ENCODE measurements at regions of chr2 and their contacts with region 1.

Region 1: GRCh38 chr2:211157856-211158463 is 601.6 kb downstream of the CPS1 start:
- DNase-seq: peak; percentile 8 to 73
- ATAC-seq: peak; percentile 92 to 97
- H3K4me3 ChIP-seq: no peak overlapping the region
- H3K27ac ChIP-seq: no peak overlapping the region
- H3K4me1 ChIP-seq: no peaks in the 10 kb centered on the region; the same call in 2 of the 3 replicates
- CTCF ChIP-seq: peak; percentile 85
- EP300 ChIP-seq: no peak
- POLR2A ChIP-seq: no peak
- RAD21 ChIP-seq: peak; percentile 69 to 72

Region 2: GRCh38 chr2:211093743-211094303 is 64.1 kb before region 1 on chr2:
- CTCF ChIA-PET with region 1: interaction called, 10 read pairs
- POLR2A ChIA-PET with region 1: no interaction called
- DNase-seq: peak in 1 of 2 experiments; percentile 25
- ATAC-seq: no peak
- H3K4me3 ChIP-seq: no peak overlapping the region
- H3K27ac ChIP-seq: no peak overlapping the region
- H3K4me1 ChIP-seq: no peaks in the 10 kb centered on the region
- CTCF ChIP-seq: 0 out of 3 replicates have a peak, but pooled peaks have one; percentile 7
- EP300 ChIP-seq: no peak
- POLR2A ChIP-seq: no peak
- RAD21 ChIP-seq: peak in 1 of 2 experiments; percentile 23; a peak in 2 of 5 replicates

Region 3: GRCh38 chr2:211203986-211204385 is 46.0 kb after region 1 on chr2:
- CTCF ChIA-PET with region 1: no interaction called
- POLR2A ChIA-PET with region 1: no interaction called
- DNase-seq: no peak
- ATAC-seq: no peak
- H3K4me3 ChIP-seq: no peak overlapping the region
- H3K27ac ChIP-seq: no peak overlapping the region
- H3K4me1 ChIP-seq: no peaks in the 10 kb centered on the region
- CTCF ChIP-seq: no peak
- EP300 ChIP-seq: no peak
- POLR2A ChIP-seq: no peak
- RAD21 ChIP-seq: no peak

Measured in A549 (cell line).